ENCODE measurements at regions of chr15 and their contacts with region 1.

Region 1: GRCh38 chr15:31128919-31129768 is 27.6 kb upstream of the TRPM1 start:
- DNase-seq: no peak
- ATAC-seq: peak; percentile 98
- H3K4me3 ChIP-seq: no peak overlapping the region
- H3K27ac ChIP-seq: no peak overlapping the region
- H3K4me1 ChIP-seq: no peaks in the 10 kb centered on the region
- H3K27me3 ChIP-seq: no peaks in the 10 kb centered on the region; a peak in 1 of 4 replicates
- CTCF ChIP-seq: peak; percentile 81 to 98 (median 96)
- EP300 ChIP-seq: no peak
- POLR2A ChIP-seq: no peak
- RAD21 ChIP-seq: peak; percentile 96

Region 2: DNA sequence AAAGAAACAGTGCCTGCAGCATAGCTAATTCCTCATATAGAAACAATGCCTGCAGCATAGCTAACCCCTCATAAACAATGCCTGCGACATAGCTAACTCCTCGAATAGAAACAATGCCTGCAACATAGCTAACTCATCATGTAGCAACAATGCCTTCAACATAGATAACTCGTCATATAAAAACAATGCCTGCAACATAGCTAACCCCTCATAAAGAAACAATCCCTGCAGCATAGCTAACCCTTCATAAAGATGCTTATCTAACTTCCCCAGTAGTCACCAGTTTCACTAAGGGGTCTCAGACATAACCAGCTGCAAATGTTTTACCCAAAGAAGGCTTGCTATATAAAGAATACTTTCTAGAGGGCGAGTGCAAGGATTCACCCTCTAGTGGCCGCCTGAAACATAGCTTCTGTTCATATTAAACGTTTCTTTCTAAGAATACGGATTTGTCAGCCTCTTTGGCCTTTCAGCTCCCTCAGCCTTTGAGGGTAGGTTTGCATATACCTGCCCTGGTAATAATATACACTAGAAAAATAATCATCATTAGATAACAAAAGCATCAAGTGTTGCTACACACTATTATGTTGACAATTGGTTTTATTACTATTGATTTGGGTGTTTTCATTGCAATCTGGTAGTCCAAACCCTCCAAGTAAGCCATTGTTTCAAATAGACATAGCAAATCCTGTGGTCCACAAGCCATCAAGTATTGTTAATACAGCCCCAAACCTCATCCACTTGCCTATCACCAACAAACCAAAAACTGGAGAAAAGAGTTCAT is 269.9 kb before region 1 on chr15:
- CTCF ChIA-PET with region 1: interaction called, 10 read pairs
- POLR2A ChIA-PET with region 1: no interaction called
- RAD21 ChIA-PET with region 1: interaction called, 8 read pairs
- SMC1A ChIA-PET with region 1: interaction called, 11 read pairs
- in situ Hi-C with region 1: no loop called
- intact Hi-C with region 1: no loop called
- DNase-seq: no peak
- ATAC-seq: peak; percentile 75
- H3K4me3 ChIP-seq: no peak overlapping the region
- H3K27ac ChIP-seq: no peak overlapping the region
- H3K4me1 ChIP-seq: no peaks in the 10 kb centered on the region
- H3K27me3 ChIP-seq: no peaks in the 10 kb centered on the region
- CTCF ChIP-seq: peak; percentile 55 to 77 (median 62)
- EP300 ChIP-seq: no peak
- POLR2A ChIP-seq: no peak
- RAD21 ChIP-seq: peak; percentile 45

Region 3: GRCh38 chr15:30896211-30896606 is 232.9 kb before region 1 on chr15:
- CTCF ChIA-PET with region 1: interaction called, 57 read pairs
- POLR2A ChIA-PET with region 1: no interaction called
- RAD21 ChIA-PET with region 1: interaction called, 35 read pairs
- SMC1A ChIA-PET with region 1: interaction called, 17 read pairs
- in situ Hi-C with region 1: no loop called
- intact Hi-C with region 1: loop called (anchors 5 kb)
- DNase-seq: no peak
- ATAC-seq: no peak
- H3K4me3 ChIP-seq: no peak overlapping the region
- H3K27ac ChIP-seq: no peak overlapping the region
- H3K4me1 ChIP-seq: no peaks in the 10 kb centered on the region
- H3K27me3 ChIP-seq: no peaks in the 10 kb centered on the region
- CTCF ChIP-seq: no peak
- EP300 ChIP-seq: no peak
- POLR2A ChIP-seq: no peak
- RAD21 ChIP-seq: no peak

Region 4: GRCh38 chr15:30973379-30973778 is 155.8 kb before region 1 on chr15:
- CTCF ChIA-PET with region 1: interaction called, 12 read pairs
- POLR2A ChIA-PET with region 1: no interaction called
- RAD21 ChIA-PET with region 1: interaction called, 6 read pairs
- SMC1A ChIA-PET with region 1: interaction called, 11 read pairs
- in situ Hi-C with region 1: no loop called
- intact Hi-C with region 1: no loop called
- DNase-seq: no peak
- ATAC-seq: no peak
- H3K4me3 ChIP-seq: no peak overlapping the region
- H3K27ac ChIP-seq: no peak overlapping the region
- H3K4me1 ChIP-seq: peaks cover 14% of the 10 kb centered on the region; the same call in 1 of the 2 replicates
- H3K27me3 ChIP-seq: no peaks in the 10 kb centered on the region
- CTCF ChIP-seq: no peak
- EP300 ChIP-seq: no peak
- POLR2A ChIP-seq: no peak
- RAD21 ChIP-seq: no peak

Region 5: DNA sequence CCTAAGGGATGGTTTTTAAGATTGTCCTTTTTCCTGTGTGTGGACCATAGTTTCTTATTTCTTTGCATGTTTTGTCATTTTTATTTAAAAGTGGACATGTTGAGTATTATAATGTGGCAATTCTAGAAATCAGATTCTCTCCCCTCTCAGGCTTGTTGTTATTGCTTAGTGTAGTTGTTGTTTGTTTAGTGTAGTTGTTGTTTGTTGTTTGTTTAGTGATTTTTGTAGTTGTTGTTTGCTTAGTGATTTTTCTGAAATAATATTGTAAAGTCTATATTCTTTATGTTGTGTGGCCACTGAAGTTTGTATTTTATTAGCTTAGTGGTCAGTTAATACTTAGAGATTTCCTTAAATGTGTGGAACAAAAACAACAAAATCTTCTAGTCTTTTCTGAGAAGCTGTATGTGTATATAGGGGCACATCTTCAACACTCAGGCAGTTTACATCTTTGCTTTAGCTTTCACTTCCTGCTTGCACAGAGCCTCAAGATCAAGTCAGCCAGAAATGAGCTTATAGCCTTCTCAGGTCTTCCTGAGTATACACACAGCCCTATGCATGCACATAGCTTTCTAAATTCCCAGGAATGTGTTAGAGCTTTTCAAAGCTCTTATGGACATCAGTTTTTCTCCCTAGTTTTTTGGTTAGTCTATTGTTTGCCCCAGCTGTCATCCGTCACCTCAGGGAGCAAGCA is 115.5 kb before region 1 on chr15:
- CTCF ChIA-PET with region 1: interaction called, 9 read pairs
- POLR2A ChIA-PET with region 1: no interaction called
- RAD21 ChIA-PET with region 1: interaction called, 11 read pairs
- SMC1A ChIA-PET with region 1: interaction called, 5 read pairs
- in situ Hi-C with region 1: no loop called
- intact Hi-C with region 1: no loop called
- DNase-seq: peak; percentile 65
- ATAC-seq: peak; percentile 100
- H3K4me3 ChIP-seq: no peak overlapping the region
- H3K27ac ChIP-seq: peak overlapping the region; percentile 75
- H3K4me1 ChIP-seq: peaks cover 17% of the 10 kb centered on the region
- H3K27me3 ChIP-seq: no peaks in the 10 kb centered on the region
- CTCF ChIP-seq: no peak
- EP300 ChIP-seq: no peak
- POLR2A ChIP-seq: peak; percentile 40; the same call in 1 of the 2 replicates
- RAD21 ChIP-seq: no peak

Region 6: GRCh38 chr15:31157644-31158091 is 28.5 kb after region 1 on chr15:
- CTCF ChIA-PET with region 1: no interaction called
- POLR2A ChIA-PET with region 1: no interaction called
- RAD21 ChIA-PET with region 1: no interaction called
- SMC1A ChIA-PET with region 1: no interaction called
- in situ Hi-C with region 1: no loop called
- intact Hi-C with region 1: no loop called
- DNase-seq: no peak
- ATAC-seq: no peak
- H3K4me3 ChIP-seq: no peak overlapping the region
- H3K27ac ChIP-seq: no peak overlapping the region
- H3K4me1 ChIP-seq: no peaks in the 10 kb centered on the region
- H3K27me3 ChIP-seq: no peaks in the 10 kb centered on the region
- CTCF ChIP-seq: no peak
- EP300 ChIP-seq: no peak
- POLR2A ChIP-seq: no peak
- RAD21 ChIP-seq: no peak

Region 7: DNA sequence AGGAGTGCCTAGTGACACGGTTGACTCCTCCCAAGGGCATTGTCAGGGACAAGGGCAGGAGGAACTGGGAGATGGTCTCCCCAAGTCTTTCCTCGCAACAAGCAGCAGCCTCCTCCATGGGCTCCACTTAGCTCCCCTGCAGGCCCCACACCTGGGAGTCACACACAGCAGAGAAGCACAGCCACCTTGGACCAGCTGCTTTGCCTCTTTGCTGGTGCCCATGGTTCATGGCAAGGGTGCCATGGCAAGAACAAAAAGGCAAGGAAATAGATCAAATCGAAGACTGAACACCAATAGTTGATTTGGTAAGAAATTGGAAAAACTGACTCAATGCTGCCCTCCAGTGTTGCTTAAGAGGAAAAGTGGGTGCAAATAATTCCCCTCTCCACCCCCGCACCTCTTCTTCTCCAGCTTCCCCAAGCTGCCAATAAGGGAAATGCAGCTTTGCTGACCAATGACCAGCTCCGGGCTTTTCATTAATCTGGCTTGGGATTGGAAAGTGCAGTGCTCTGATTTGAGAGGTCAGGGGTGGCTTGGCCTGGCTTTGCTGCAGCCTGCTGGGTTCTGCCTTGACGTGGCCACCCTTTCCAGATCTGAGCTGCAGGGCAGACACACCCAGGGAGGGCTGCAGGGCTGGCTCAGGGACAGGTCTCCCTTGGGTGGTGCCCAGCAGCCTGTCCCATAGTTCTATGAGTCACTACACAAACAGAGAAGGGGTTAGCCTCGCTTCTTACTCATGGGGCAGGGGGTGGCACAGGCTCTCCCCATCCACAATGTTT is 359.5 kb after region 1 on chr15:
- CTCF ChIA-PET with region 1: interaction called, 23 read pairs
- POLR2A ChIA-PET with region 1: no interaction called
- RAD21 ChIA-PET with region 1: interaction called, 14 read pairs
- SMC1A ChIA-PET with region 1: interaction called, 6 read pairs
- in situ Hi-C with region 1: no loop called
- intact Hi-C with region 1: loop called (anchors 5 kb)
- DNase-seq: peak; percentile 78
- ATAC-seq: peak; percentile 73
- H3K4me3 ChIP-seq: no peak overlapping the region
- H3K27ac ChIP-seq: peak overlapping the region; percentile 49
- H3K4me1 ChIP-seq: peaks cover 18% of the 10 kb centered on the region
- H3K27me3 ChIP-seq: no peaks in the 10 kb centered on the region
- CTCF ChIP-seq: peak; percentile 71 to 93 (median 91)
- EP300 ChIP-seq: no peak
- POLR2A ChIP-seq: no peak
- RAD21 ChIP-seq: peak; percentile 84